ENCODE measurements at regions of chr4 and their contacts with region 1.

Region 1: GRCh38 chr4:170827562-170828260 is 738.0 kb upstream of the AADAT start:
- DNase-seq: no peak
- ATAC-seq: no peak
- H3K4me3 ChIP-seq: no peak overlapping the region
- H3K27ac ChIP-seq: no peak overlapping the region
- H3K4me1 ChIP-seq: no peaks in the 10 kb centered on the region
- H3K27me3 ChIP-seq: no peaks in the 10 kb centered on the region
- CTCF ChIP-seq: no peak

Region 2: DNA sequence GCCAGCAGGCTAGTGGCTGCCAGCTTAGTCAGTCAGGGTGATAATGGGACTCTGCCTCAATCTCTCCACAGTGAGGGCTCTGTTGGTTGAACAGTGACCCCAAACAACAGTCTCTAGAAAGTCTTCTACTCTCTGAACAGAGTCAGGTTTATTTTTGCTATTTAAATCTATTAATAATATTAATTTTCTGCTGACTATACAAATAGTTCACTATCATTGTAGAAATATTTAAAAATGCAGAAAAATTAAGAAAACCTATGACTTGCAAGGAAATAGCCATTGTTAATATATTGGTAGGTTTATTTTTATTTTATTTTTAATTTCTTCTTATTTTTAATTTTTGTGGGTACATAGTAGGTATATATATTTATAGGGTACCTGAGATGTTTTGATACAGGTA is 670.0 kb before region 1 on chr4:
- intact Hi-C with region 1: loop called in 1 of 10 experiments (anchors 10 kb)
- DNase-seq: no peak
- ATAC-seq: no peak
- H3K4me3 ChIP-seq: no peak overlapping the region
- H3K27ac ChIP-seq: no peak overlapping the region
- H3K4me1 ChIP-seq: no peaks in the 10 kb centered on the region
- H3K27me3 ChIP-seq: no peaks in the 10 kb centered on the region
- CTCF ChIP-seq: no peak

Measured in heart right ventricle (tissue), 16 donors.